ENCODE measurements at regions of chr10 and their contacts with region 1.

Region 1: DNA sequence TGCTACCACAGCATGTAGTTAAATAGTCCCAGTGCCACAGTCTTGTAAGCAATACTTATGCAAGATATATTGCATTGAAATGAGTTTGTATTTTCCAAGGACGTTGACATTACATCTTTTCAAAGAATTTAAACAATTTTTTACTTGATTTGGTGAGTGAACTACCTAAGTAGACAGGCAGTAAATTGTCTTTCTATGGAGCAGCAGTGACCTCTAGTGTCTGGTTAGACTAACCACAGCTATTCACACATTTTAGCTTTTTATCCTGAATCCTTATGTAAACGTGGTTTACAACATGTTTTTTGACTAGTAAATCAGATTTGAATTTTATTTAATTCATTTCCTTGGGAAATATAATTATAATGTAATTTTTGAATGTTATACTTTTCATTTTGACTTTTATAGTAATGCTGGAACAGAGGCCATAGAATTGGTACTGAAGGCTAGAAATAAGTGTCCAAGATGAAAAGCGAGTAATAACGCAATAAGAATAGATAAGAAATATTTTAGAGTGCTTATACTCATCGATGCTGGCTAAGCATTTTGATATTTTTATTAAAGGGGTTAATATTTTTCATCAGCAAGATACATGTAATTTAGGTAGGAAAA is 5.6 kb downstream of the LRRTM3 start:
- DNase-seq: no peak
- H3K4me3 Mint-ChIP-seq: no peak overlapping the region
- H3K27ac Mint-ChIP-seq: no peak overlapping the region
- H3K4me1 Mint-ChIP-seq: no peaks in the 10 kb centered on the region
- H3K27me3 Mint-ChIP-seq: peaks cover 30% of the 10 kb centered on the region

Region 2: GRCh38 chr10:66180581-66181318 is 750.7 kb before region 1 on chr10:
- CTCF ChIA-PET with region 1: no interaction called
- POLR2A ChIA-PET with region 1: no interaction called
- intact Hi-C with region 1: loop called (anchors 1 kb)
- DNase-seq: no peak
- H3K4me3 Mint-ChIP-seq: no peak overlapping the region
- H3K27ac Mint-ChIP-seq: no peak overlapping the region
- H3K4me1 Mint-ChIP-seq: no peaks in the 10 kb centered on the region
- H3K27me3 Mint-ChIP-seq: no peaks in the 10 kb centered on the region

Measured in activated CD4-positive, alpha-beta memory T cell treated with anti-CD3 and anti-CD28 coated beads for 36 hours (primary cell).